ENCODE measurements at regions of chr14 and their contacts with region 1.

Region 1: GRCh38 chr14:106691601-106692291 is 1165.4 kb downstream of the TMEM121 start:
- DNase-seq: peak; percentile 77 to 84 (median 80)
- H3K4me3 ChIP-seq: no peak overlapping the region
- H3K27ac ChIP-seq: no peak overlapping the region
- H3K4me1 ChIP-seq: peaks cover 0 to 14% (median 7%) of the 10 kb centered on the region in 4 experiments
- H3K27me3 ChIP-seq: no peaks in the 10 kb centered on the region

Region 2: GRCh38 chr14:106530423-106531107 is 161.2 kb before region 1 on chr14:
- CTCF ChIA-PET with region 1: no interaction called
- POLR2A ChIA-PET with region 1: no interaction called
- DNase-seq: peak; percentile 59 to 75 (median 75)
- H3K4me3 ChIP-seq: no peak overlapping the region
- H3K27ac ChIP-seq: no peak overlapping the region
- H3K4me1 ChIP-seq: no peaks in the 10 kb centered on the region
- H3K27me3 ChIP-seq: peaks cover 0 to 21% (median 0%) of the 10 kb centered on the region in 5 experiments

Region 3: DNA sequence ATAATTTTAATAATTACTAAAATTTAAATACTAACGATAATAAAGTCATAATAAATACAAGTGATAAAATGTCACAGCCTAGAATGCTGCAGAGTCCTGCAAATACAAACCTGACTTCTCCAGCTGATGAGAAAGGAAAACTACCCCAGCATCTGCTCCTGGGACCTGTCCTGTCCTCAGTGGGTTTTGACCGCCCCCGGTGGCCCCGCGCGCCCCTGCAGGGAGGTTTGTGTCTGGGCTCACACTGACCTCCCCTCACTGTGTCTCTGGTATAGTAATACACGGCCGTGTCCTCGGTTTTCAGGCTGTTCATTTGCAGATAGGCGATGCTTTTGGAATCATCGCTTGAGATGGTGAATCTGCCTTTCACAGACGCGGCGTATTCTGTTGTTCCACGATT is 25.9 kb before region 1 on chr14:
- CTCF ChIA-PET with region 1: interaction called, 13 read pairs
- POLR2A ChIA-PET with region 1: no interaction called
- DNase-seq: no peak
- H3K4me3 ChIP-seq: no peak overlapping the region
- H3K27ac ChIP-seq: no peak overlapping the region
- H3K4me1 ChIP-seq: peaks cover 3 to 44% (median 15%) of the 10 kb centered on the region in 4 experiments
- H3K27me3 ChIP-seq: no peaks in the 10 kb centered on the region

Region 4: DNA sequence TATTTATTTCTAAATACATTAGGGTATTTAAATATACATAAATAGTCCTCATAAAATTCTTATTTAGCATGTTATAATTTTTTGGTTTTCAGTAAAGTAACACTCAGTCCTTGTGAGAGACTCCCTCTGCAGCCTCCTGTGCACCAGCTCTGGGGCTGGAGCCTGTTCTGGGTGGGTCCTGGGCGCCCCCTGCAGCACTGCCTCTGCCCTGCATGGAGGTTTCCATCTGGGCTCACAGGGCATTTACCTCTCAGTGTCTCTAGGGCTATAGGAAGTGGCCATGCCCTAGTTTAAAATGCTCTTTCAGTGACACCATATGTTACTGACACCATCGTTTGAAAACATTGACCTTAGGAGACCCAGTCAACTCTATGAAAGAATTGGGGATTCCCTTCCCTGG is 10.2 kb before region 1 on chr14:
- CTCF ChIA-PET with region 1: interaction called, 47 read pairs
- POLR2A ChIA-PET with region 1: interaction called, 3 read pairs
- DNase-seq: peak in 2 of 3 donors; percentile 31 to 48
- H3K4me3 ChIP-seq: no peak overlapping the region
- H3K27ac ChIP-seq: no peak overlapping the region
- H3K4me1 ChIP-seq: peaks cover 0 to 29% (median 22%) of the 10 kb centered on the region in 4 experiments
- H3K27me3 ChIP-seq: no peaks in the 10 kb centered on the region

Region 5: DNA sequence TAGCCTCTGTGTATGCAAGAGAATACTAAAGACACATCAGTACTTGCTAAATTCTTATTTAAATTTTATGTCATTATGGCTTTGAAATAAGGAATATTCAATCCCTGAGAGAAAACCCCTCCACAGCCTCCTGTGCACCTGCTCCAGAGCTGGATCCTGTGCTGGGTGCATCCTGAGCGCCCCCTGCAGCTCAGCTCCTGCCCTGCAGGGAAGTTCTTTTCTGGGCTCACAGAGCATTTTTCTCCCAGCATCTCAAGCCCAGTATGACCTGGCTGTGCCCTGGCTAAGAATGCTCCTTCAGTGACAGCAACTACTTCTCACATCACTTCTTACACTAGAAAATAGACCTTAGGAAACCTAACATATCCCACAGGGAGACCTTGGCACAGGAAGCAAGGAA is 46.3 kb after region 1 on chr14:
- CTCF ChIA-PET with region 1: interaction called, 15 read pairs
- POLR2A ChIA-PET with region 1: no interaction called
- DNase-seq: peak in 1 of 3 donors; percentile 40
- H3K4me3 ChIP-seq: peak overlapping the region in 1 of 7 experiments; percentile 43
- H3K27ac ChIP-seq: no peak overlapping the region
- H3K4me1 ChIP-seq: peaks cover 0 to 3% (median 0%) of the 10 kb centered on the region in 4 experiments
- H3K27me3 ChIP-seq: no peaks in the 10 kb centered on the region

Measured in common myeloid progenitor, CD34-positive (primary cell).